Naive thymus-derived CD4-positive, alpha-beta T cell (primary cell): ENCODE measurements at regions of chr10 and their contacts with region 1.

Region 1: GRCh38 chr10:102245101-102245931 is at the start of gene GBF1:
- DNase-seq: peak; percentile 69 to 97 (median 96)
- ATAC-seq: peak; percentile 92
- H3K4me3 ChIP-seq: peak within 1 kb of the TSS; percentile 84
- H3K4me3 Mint-ChIP-seq: peak within 1 kb of the TSS; percentile 83 to 100 (median 97)
- H3K27ac ChIP-seq: peak within 1 kb of the TSS; percentile 90
- H3K27ac Mint-ChIP-seq: peak within 1 kb of the TSS; percentile 65 to 98 (median 95)
- H3K4me1 ChIP-seq: peaks cover 17 to 37% of the 10 kb centered on the region in 2 donors
- H3K4me1 Mint-ChIP-seq: peaks cover 43 to 69% (median 54%) of the 10 kb centered on the region in 7 donors
- H3K27me3 ChIP-seq: peaks cover 0 to 16% of the 10 kb centered on the region in 2 donors
- H3K27me3 Mint-ChIP-seq: peaks cover 14 to 27% (median 22%) of the 10 kb centered on the region in 5 donors
- total RNA-seq, gene GBF1: 36.2 to 47.2 (median 37.8) TPM

Region 2: DNA sequence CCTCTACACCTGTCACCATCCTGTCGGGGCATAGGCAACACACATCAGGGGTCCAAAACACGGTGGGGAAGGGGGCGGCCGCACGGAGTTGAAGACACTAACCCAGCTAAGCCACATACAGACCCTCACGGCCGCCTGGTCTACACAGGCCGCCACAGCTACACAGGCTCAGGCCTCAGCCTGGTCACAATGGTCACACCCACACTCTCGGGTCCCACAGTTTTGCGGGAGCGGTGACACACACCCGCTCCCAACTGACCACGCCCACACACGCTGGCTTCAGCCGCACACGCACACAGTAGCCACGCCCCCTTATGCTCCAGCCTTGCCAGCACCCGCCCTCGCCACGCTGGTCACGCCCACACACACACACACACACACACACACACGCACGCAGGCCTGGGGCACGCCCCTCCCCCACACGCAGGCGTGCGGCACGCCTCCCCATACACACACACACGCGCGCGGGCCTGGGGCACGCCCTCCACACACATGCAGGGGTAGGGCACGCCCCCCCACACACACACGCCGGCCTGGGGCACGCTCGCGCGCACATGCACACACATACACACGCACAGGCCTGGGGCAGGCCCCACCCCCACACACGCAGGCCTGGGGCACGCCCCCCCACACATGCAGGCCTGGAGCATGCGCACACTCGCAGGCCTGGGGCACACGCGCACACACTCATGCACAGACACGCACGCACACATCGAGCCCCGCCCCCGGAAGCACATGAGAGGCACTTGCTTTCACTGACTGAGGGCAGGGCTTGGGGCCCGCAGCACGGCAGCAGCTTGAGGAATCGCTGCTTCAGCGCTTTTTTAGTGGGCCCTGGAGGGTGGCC is 414.8 kb before region 1 on chr10:
- CTCF ChIA-PET with region 1: no interaction called
- POLR2A ChIA-PET with region 1: no interaction called
- intact Hi-C with region 1: loop called in 1 of 2 experiments (anchors 1 kb)
- DNase-seq: peak; percentile 89 to 98 (median 95)
- ATAC-seq: peak; percentile 90
- H3K4me3 ChIP-seq: peak overlapping the region; percentile 66
- H3K4me3 Mint-ChIP-seq: peak overlapping the region; percentile 79 to 94 (median 88)
- H3K27ac ChIP-seq: peak overlapping the region; percentile 85
- H3K27ac Mint-ChIP-seq: peak overlapping the region; percentile 94 to 100 (median 99)
- H3K4me1 ChIP-seq: peaks cover 22 to 53% of the 10 kb centered on the region in 2 donors
- H3K4me1 Mint-ChIP-seq: peaks cover 41 to 59% (median 53%) of the 10 kb centered on the region in 7 donors
- H3K27me3 ChIP-seq: no peaks in the 10 kb centered on the region
- H3K27me3 Mint-ChIP-seq: peaks cover 0 to 4% (median 0%) of the 10 kb centered on the region in 5 donors

Region 3: GRCh38 chr10:102114861-102115618 is 130.3 kb before region 1 on chr10:
- CTCF ChIA-PET with region 1: no interaction called
- POLR2A ChIA-PET with region 1: no interaction called
- intact Hi-C with region 1: loop called in 1 of 2 experiments (anchors 2 kb)
- DNase-seq: peak; percentile 61 to 83 (median 70)
- ATAC-seq: peak; percentile 86
- H3K4me3 ChIP-seq: peak overlapping the region; percentile 77
- H3K4me3 Mint-ChIP-seq: peak overlapping the region; percentile 84 to 97 (median 92)
- H3K27ac ChIP-seq: peak overlapping the region; percentile 97
- H3K27ac Mint-ChIP-seq: peak overlapping the region; percentile 80 to 98 (median 92)
- H3K4me1 ChIP-seq: peaks cover 49 to 58% of the 10 kb centered on the region in 2 donors
- H3K4me1 Mint-ChIP-seq: peaks cover 54 to 76% (median 67%) of the 10 kb centered on the region in 7 donors
- H3K27me3 ChIP-seq: no peaks in the 10 kb centered on the region
- H3K27me3 Mint-ChIP-seq: no peaks in the 10 kb centered on the region

Region 4: GRCh38 chr10:102231357-102232318 is 13.7 kb before region 1 on chr10:
- CTCF ChIA-PET with region 1: interaction called, 10 read pairs
- POLR2A ChIA-PET with region 1: interaction called, 6 read pairs
- intact Hi-C with region 1: loop called (anchors 1 kb)
- DNase-seq: peak; percentile 39 to 83 (median 63)
- ATAC-seq: peak; percentile 80
- H3K4me3 ChIP-seq: peak overlapping the region; percentile 58
- H3K4me3 Mint-ChIP-seq: peak overlapping the region; percentile 62 to 86 (median 78)
- H3K27ac ChIP-seq: no peak overlapping the region
- H3K27ac Mint-ChIP-seq: no peak overlapping the region
- H3K4me1 ChIP-seq: peaks cover 10 to 13% of the 10 kb centered on the region in 2 donors
- H3K4me1 Mint-ChIP-seq: peaks cover 5 to 16% (median 9%) of the 10 kb centered on the region in 7 donors
- H3K27me3 ChIP-seq: peaks cover 3 to 5% of the 10 kb centered on the region in 2 donors
- H3K27me3 Mint-ChIP-seq: peaks cover 57 to 76% (median 60%) of the 10 kb centered on the region in 5 donors

Region 5: GRCh38 chr10:102420810-102421644 is 175.7 kb after region 1 on chr10 and contains the start of gene FBXL15:
- CTCF ChIA-PET with region 1: no interaction called
- POLR2A ChIA-PET with region 1: interaction called, 9 read pairs
- intact Hi-C with region 1: loop called in 1 of 2 experiments (anchors 1 kb)
- DNase-seq: peak; percentile 82 to 96 (median 90)
- ATAC-seq: peak; percentile 86
- H3K4me3 ChIP-seq: peak within 1 kb of the TSS; percentile 93
- H3K4me3 Mint-ChIP-seq: peak within 1 kb of the TSS; percentile 94 to 99 (median 98)
- H3K27ac ChIP-seq: peak within 1 kb of the TSS; percentile 75
- H3K27ac Mint-ChIP-seq: peak within 1 kb of the TSS; percentile 91 to 97 (median 95)
- H3K4me1 ChIP-seq: peaks cover 26 to 33% of the 10 kb centered on the region in 2 donors
- H3K4me1 Mint-ChIP-seq: peaks cover 17 to 46% (median 38%) of the 10 kb centered on the region in 7 donors
- H3K27me3 ChIP-seq: no peaks in the 10 kb centered on the region
- H3K27me3 Mint-ChIP-seq: peaks cover 17 to 26% (median 19%) of the 10 kb centered on the region in 5 donors
- total RNA-seq, gene FBXL15: 10.8 to 21.0 (median 14.1) TPM

Region 6: GRCh38 chr10:102461187-102462054 is 216.1 kb after region 1 on chr10:
- CTCF ChIA-PET with region 1: interaction called, 3 read pairs
- POLR2A ChIA-PET with region 1: no interaction called
- intact Hi-C with region 1: loop called in 1 of 2 experiments (anchors 1 kb)
- DNase-seq: peak; percentile 84 to 95 (median 90)
- ATAC-seq: peak; percentile 99
- H3K4me3 ChIP-seq: peak overlapping the region; percentile 93
- H3K4me3 Mint-ChIP-seq: peak overlapping the region; percentile 83 to 96 (median 92)
- H3K27ac ChIP-seq: peak overlapping the region; percentile 74
- H3K27ac Mint-ChIP-seq: peak overlapping the region; percentile 72 to 90 (median 85)
- H3K4me1 ChIP-seq: peaks cover 9 to 14% of the 10 kb centered on the region in 2 donors
- H3K4me1 Mint-ChIP-seq: peaks cover 19 to 40% (median 34%) of the 10 kb centered on the region in 7 donors
- H3K27me3 ChIP-seq: no peaks in the 10 kb centered on the region
- H3K27me3 Mint-ChIP-seq: peaks cover 0 to 2% (median 0%) of the 10 kb centered on the region in 5 donors

Region 7: GRCh38 chr10:102853944-102854694 is 608.8 kb after region 1 on chr10 and contains the start of gene BORCS7:
- CTCF ChIA-PET with region 1: no interaction called
- POLR2A ChIA-PET with region 1: no interaction called
- intact Hi-C with region 1: loop called in 1 of 2 experiments (anchors 1 kb)
- DNase-seq: peak; percentile 69 to 91 (median 88)
- ATAC-seq: peak; percentile 100
- H3K4me3 ChIP-seq: peak within 1 kb of the TSS; percentile 100
- H3K4me3 Mint-ChIP-seq: peak within 1 kb of the TSS; percentile 84 to 99 (median 91)
- H3K27ac ChIP-seq: peak within 1 kb of the TSS; percentile 95
- H3K27ac Mint-ChIP-seq: peak within 1 kb of the TSS; percentile 96 to 99 (median 99)
- H3K4me1 ChIP-seq: no peaks in the 10 kb centered on the region
- H3K4me1 Mint-ChIP-seq: peaks cover 7 to 25% (median 15%) of the 10 kb centered on the region in 7 donors
- H3K27me3 ChIP-seq: no peaks in the 10 kb centered on the region
- H3K27me3 Mint-ChIP-seq: no peaks in the 10 kb centered on the region
- total RNA-seq, gene BORCS7: 11.6 to 20.2 (median 13.3) TPM